PC-9 (cell line): ENCODE measurements at regions of chr12 and their contacts with region 1.

Region 1: DNA sequence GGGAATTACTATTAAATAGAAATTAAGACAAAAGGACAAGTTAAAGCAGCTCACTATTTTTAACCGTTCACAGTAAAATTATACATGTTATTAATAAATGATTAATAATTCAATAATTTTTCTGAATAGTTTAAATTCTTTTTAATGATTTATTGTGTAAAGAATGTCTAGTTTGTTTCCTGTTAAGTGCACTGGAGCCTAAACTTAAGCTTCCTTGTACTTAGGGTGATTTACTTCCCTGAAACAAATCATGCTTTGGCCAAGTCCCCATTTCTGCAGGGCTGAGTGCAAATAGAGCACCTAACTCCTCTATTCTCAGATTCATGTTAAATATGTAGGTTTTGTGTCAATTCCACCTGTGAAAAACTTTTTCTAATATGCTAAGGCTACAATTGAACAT is 188.9 kb upstream of the PDZRN4 start:
- DNase-seq: no peak
- H3K4me3 ChIP-seq: no peak overlapping the region
- H3K27ac ChIP-seq: no peak overlapping the region
- H3K4me1 ChIP-seq: no peaks in the 10 kb centered on the region
- H3K27me3 ChIP-seq: no peaks in the 10 kb centered on the region
- CTCF ChIP-seq: no peak

Region 2: GRCh38 chr12:40634517-40635131 is 364.6 kb before region 1 on chr12:
- CTCF ChIA-PET with region 1: no interaction called
- POLR2A ChIA-PET with region 1: interaction called, 10 read pairs
- intact Hi-C with region 1: no loop called
- DNase-seq: no peak
- H3K4me3 ChIP-seq: no peak overlapping the region
- H3K27ac ChIP-seq: no peak overlapping the region
- H3K4me1 ChIP-seq: no peaks in the 10 kb centered on the region
- H3K27me3 ChIP-seq: no peaks in the 10 kb centered on the region
- CTCF ChIP-seq: no peak